ENCODE measurements at regions of chr11 and their contacts with region 1.

Region 1: DNA sequence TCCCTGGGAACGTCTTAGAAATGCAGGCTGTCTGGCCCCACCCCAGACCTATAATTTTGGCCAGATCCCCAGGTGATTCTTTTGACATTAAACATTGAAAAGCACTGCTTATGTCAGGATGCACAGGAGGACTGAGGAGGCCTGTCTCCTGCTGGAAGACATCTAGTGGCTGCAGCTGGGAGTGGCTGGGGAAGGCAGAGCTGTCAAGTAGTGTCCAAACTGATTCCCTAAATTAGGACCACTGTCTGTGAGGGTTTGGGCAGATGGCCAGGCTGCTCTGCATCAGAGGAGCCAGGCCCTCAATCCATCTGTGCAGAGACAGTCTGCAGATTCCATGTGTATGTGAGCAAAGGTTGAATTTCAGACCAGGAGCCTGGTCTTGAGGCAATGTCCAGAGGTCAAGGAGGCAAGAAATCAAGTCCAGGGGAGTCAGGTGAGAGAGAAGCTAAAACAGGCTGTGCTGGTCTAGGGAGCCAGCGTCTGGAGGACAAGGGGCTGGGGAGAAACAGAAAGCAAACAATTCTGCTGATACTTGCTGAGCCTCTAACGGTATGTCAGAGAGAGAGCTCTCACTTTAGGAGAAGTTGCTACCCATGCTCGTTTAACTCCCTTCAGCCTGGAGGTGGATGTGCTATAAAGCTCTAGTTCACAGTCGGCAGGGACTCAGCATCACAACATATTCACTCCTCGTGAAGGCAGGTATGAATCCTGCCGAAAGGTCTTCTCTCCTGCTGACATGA is 15.3 kb upstream of the SYTL2 start:
- DNase-seq: peak; percentile 44
- H3K4me3 Mint-ChIP-seq: no peak overlapping the region
- H3K27ac Mint-ChIP-seq: peak overlapping the region; percentile 92
- H3K4me1 Mint-ChIP-seq: peaks cover 31% of the 10 kb centered on the region
- H3K27me3 Mint-ChIP-seq: no peaks in the 10 kb centered on the region
- CTCF ChIP-seq: peak; percentile 42

Region 2: DNA sequence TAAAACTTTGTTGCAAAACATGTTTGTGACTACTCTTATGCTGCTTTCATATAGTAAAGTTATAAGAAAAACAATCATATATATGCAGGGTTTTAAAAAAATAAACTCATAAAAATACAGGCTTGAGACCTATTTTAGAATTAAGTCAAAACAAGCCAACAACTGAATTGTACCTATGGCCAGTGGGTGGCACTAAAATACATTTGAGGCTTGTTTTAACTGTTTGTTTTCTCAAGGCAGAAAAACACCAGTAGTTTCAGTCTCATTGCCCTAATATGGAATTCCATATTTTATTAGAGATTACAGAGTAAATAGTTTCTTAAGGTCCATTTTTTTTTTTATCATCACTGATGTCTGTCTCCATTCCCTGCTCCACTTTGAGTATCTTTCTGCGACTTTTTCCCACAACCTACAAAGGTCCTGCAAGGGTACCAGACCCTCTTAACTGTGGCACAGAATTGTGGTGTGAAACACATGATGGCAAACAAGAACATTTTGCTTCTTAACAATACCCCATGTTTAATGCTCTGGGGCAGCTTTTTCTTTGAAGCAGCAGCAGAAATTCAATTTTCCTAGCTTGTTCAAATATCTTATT is 131.8 kb before region 1 on chr11:
- CTCF ChIA-PET with region 1: interaction called, 106 read pairs
- POLR2A ChIA-PET with region 1: no interaction called
- intact Hi-C with region 1: loop called (anchors 1 kb)
- DNase-seq: peak; percentile 45
- H3K4me3 Mint-ChIP-seq: no peak overlapping the region
- H3K27ac Mint-ChIP-seq: no peak overlapping the region
- H3K4me1 Mint-ChIP-seq: no peaks in the 10 kb centered on the region
- H3K27me3 Mint-ChIP-seq: peaks cover 16% of the 10 kb centered on the region
- CTCF ChIP-seq: peak; percentile 45

Region 3: GRCh38 chr11:85815186-85815931 is 10.9 kb before region 1 on chr11:
- CTCF ChIA-PET with region 1: interaction called, 19 read pairs
- POLR2A ChIA-PET with region 1: interaction called, 9 read pairs
- intact Hi-C with region 1: no loop called
- DNase-seq: no peak
- H3K4me3 Mint-ChIP-seq: no peak overlapping the region
- H3K27ac Mint-ChIP-seq: no peak overlapping the region
- H3K4me1 Mint-ChIP-seq: peaks cover 16% of the 10 kb centered on the region
- H3K27me3 Mint-ChIP-seq: no peaks in the 10 kb centered on the region
- CTCF ChIP-seq: no peak

Measured in MCF 10A (cell line).